Dorsolateral prefrontal cortex (tissue), 120 donors: ENCODE measurements at regions of chr13 and their contacts with region 1.

Region 1: GRCh38 chr13:97109841-97110492 is 112.2 kb upstream of the MBNL2 start:
- DNase-seq: peak; percentile 85 to 95 (median 88)
- H3K4me3 ChIP-seq: peak overlapping the region in 58 of 59 donors; percentile 11 to 69 (median 50)
- H3K27ac ChIP-seq: peak overlapping the region in 58 of 59 donors; percentile 8 to 89 (median 75)
- H3K27me3 ChIP-seq: no peaks in the 10 kb centered on the region
- CTCF ChIP-seq: peak; percentile 95 to 100 (median 99)

Region 2: DNA sequence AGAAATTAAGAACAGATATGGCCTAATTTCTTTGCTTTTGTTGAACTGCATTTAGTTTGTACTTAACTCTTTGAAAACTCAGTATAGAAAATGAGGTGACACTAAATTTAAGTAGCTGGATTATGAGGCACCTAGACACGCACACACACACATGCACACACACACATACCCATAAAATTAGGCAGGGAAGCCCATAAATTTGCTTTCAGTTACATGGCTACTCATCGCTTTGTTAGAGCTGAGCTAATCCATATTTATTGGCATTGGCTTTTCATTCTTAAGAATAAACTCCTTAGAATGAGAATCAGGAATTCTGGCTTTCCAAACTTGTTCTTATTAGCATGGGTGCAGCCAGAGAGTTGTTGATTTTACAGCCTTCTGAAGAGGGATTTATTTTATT is 50.5 kb after region 1 on chr13:
- intact Hi-C with region 1: no loop called
- DNase-seq: no peak
- H3K4me3 ChIP-seq: no peak overlapping the region
- H3K27ac ChIP-seq: no peak overlapping the region
- H3K27me3 ChIP-seq: no peaks in the 10 kb centered on the region
- CTCF ChIP-seq: no peak

Region 3: GRCh38 chr13:97212601-97213040 is 102.7 kb after region 1 on chr13:
- intact Hi-C with region 1: loop called in 1 of 2 experiments (anchors 2 kb)
- DNase-seq: peak in 1 of 10 donors; percentile 42
- H3K4me3 ChIP-seq: peak overlapping the region in 2 of 59 donors; percentile 28 to 30
- H3K27ac ChIP-seq: peak overlapping the region in 58 of 59 donors; percentile 35 to 96 (median 86)
- H3K27me3 ChIP-seq: no peaks in the 10 kb centered on the region
- CTCF ChIP-seq: peak; percentile 17 to 76 (median 58)

Region 4: DNA sequence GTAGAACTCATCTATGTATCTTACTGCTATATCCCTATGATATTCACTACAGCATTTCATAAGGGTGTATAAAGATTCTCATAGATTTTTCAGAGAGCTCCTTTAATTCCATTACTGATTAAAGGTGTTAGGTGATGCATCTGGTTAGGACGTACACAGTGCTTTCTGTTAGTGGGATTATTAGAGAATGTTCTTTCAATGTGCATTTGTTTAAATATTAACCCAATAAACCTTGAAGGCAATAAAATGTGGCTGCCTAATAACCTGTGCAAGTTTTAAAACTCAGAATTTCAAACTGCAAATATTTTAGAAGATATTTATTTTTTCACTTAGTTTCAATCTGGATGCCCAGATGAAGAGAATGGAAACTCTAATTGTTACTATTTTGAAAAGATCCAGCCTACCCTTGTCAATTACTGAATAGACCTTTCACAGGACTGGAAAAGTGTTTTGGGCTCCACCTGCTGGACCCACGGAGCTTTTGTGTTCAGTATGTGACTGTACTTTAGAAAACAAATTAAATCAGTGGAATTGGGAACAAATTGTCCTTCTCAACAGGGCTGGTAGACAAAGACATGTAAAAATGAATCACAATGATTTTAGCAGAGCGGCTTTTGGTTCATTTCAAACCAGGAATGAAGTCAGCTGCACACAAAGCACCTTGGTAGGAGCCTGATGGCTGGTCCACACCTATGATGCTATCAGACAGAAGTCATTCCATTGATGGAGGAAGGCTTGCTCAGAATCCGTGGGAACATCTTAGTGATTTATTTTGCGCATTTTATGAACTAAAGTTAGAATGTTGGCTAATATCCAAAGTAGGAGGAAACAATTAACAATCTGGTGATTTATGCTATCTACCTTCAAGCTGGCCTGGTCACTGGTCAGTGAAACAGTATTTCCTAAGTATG is 234.6 kb after region 1 on chr13:
- intact Hi-C with region 1: loop called in 1 of 2 experiments (anchors 5 kb)
- DNase-seq: peak in 9 of 10 donors; percentile 60 to 85 (median 76)
- H3K4me3 ChIP-seq: peak overlapping the region in 5 of 59 donors; percentile 1 to 30 (median 11)
- H3K27ac ChIP-seq: peak overlapping the region in 57 of 59 donors; percentile 10 to 89 (median 72)
- H3K27me3 ChIP-seq: no peaks in the 10 kb centered on the region
- CTCF ChIP-seq: peak; percentile 39 to 86 (median 74)